Dorsolateral prefrontal cortex (tissue), 120 donors: ENCODE measurements at regions of chr1 and their contacts with region 1.

Region 1: GRCh38 chr1:21308847-21309652 is 18.8 kb upstream of the ECE1 start:
- DNase-seq: peak in 1 of 10 donors; percentile 33
- H3K4me3 ChIP-seq: no peak overlapping the region
- H3K27ac ChIP-seq: peak overlapping the region in 48 of 59 donors; percentile 23 to 97 (median 88)
- H3K27me3 ChIP-seq: no peaks in the 10 kb centered on the region
- CTCF ChIP-seq: no peak

Region 2: DNA sequence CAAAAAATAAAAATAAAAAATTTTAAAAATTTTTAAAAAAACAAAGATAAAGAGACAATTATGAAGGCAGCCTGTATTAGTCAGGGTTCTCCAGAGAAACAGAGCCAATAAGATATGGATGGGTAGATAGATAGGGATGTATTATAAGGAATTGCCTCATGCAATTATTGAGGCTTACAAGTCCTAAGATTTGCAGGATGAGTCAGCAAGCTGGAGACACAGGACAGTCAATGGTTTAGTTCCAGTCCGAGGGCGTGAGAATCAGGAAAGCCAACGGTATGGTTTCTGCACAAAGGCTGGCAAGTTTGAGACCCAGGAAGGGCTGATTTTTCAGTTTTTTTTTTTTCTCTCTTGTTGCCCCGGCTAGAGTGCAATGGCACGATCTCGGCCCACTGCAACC is 108.3 kb before region 1 on chr1:
- intact Hi-C with region 1: no loop called
- DNase-seq: no peak
- H3K4me3 ChIP-seq: no peak overlapping the region
- H3K27ac ChIP-seq: no peak overlapping the region
- H3K27me3 ChIP-seq: no peaks in the 10 kb centered on the region
- CTCF ChIP-seq: no peak

Region 3: GRCh38 chr1:21261551-21262281 is 47.3 kb before region 1 on chr1:
- intact Hi-C with region 1: loop called in 1 of 2 experiments (anchors 2 kb)
- DNase-seq: peak in 5 of 10 donors; percentile 47 to 62 (median 49)
- H3K4me3 ChIP-seq: peak overlapping the region in 3 of 59 donors; percentile 2 to 10 (median 9)
- H3K27ac ChIP-seq: peak overlapping the region; percentile 23 to 94 (median 82)
- H3K27me3 ChIP-seq: no peaks in the 10 kb centered on the region
- CTCF ChIP-seq: no peak

Region 4: DNA sequence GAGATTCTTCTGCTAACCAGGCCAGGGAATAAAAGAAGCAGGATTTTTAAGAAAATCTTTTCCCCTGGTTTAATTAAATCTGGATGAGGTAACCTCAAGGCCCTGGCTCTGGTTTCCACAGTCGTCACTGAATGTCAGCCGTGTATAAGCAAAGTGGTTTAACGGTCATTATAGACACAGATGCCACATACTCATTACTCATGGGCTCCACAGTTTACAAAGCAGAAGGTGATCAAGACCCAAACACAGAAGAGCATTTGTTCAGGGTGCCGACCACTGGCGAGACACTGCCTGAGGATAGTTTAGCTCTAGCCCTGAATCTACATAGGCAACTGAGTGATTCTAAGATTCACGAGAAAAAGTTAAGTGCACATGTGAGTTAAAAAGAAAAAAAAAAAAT is 387.9 kb after region 1 on chr1:
- intact Hi-C with region 1: no loop called
- DNase-seq: no peak
- H3K4me3 ChIP-seq: no peak overlapping the region
- H3K27ac ChIP-seq: no peak overlapping the region
- H3K27me3 ChIP-seq: no peaks in the 10 kb centered on the region
- CTCF ChIP-seq: no peak